ENCODE measurements at regions of chrX and their contacts with region 1.

Region 1: GRCh38 chrX:55057675-55058249 is 17.1 kb upstream of the PAGE2B start:
- DNase-seq: peak in 3 of 10 donors; percentile 9 to 17 (median 13)

Region 2: DNA sequence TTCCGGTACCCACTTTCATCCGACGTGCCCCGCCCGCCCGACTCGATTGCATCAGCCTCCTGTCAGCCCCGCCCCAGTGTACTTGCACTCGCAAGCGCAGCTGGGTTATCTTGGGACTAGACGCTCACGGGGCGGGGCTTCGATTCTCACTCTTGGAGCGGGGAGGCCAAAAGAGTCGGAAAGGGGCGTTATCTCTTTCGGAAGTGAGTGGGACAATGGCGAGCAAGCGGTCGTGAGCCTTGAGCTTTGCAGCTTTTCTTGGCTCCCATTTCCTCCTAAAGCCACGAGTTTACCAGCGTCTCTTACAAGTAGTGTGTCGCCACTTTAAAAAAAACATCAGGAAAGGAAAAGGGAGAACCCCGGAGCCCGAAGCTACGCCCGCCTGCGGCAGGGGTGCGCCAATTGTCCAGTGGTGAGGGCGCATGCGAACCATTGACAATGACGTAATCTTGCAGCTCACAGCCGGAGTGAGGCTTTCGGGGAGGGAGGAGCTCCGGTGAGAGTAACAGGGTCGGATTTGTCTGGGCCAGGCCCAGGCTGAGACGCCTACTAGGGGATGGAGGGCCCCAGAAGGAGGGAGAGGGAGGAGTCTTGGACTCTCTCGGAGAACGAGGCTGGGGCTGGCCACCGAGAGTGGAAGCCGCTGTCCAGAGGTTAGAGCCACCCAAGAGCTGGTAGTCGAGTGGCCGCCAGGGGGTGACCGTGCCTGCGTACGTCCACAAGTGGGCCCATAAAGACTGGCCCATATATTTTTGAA is 418.2 kb before region 1 on chrX:
- intact Hi-C with region 1: loop called (anchors 5 kb)
- DNase-seq: peak; percentile 78 to 98 (median 84)

Region 3: GRCh38 chrX:54891573-54891972 is 166.2 kb before region 1 on chrX:
- intact Hi-C with region 1: loop called (anchors 2 kb)
- DNase-seq: peak in 2 of 10 donors; percentile 7 to 15

Region 4: DNA sequence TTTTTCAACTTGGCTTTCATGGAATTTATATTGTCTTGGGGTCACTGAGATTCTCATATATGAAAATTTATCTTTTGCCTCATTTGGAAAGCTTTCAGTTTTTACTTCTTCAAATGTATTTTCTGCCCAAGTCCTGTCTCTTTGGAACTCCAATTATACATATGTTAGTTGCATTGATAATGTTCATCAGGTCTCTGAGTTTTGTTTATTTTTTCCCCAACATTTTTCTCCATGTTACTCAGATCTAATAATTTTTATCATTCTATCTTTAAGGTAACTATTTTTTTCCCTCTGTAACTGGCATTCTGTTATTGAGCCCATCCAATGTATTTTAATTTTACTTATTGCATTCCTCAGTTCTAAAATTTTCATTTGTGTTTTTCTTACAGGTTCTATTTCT is 147.8 kb before region 1 on chrX:
- intact Hi-C with region 1: no loop called
- DNase-seq: no peak

Region 5: DNA sequence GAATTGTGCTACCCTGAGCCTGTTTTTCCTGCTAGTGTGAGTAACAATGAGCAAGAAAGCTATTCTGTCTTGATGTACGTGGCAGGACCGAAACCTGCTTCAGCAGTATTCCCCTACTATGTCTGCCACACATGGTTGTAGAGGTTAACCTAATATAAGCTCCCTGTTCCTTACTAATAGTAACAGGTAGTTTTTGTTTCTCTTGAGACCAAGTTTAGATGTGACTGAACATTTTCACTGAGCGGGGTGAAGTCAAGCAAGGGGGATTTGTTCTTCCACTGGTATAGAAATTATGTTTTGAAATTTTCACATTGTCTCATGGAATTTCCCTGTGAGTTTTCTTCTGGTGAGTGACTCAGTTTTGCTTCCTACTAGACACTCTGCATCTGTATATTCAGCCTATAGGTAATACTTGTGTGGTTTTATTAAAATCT is 697.1 kb after region 1 on chrX:
- intact Hi-C with region 1: no loop called
- DNase-seq: no peak